ENCODE measurements at regions of chr3 and their contacts with region 1.

Region 1: GRCh38 chr3:32733631-32734229 is 48.7 kb downstream of the CNOT10 start:
- DNase-seq: peak; percentile 23 to 42 (median 26)
- ATAC-seq: peak; percentile 78
- H3K4me3 ChIP-seq: no peak overlapping the region
- H3K27ac ChIP-seq: no peak overlapping the region
- H3K4me1 ChIP-seq: no peaks in the 10 kb centered on the region
- H3K27me3 ChIP-seq: no peaks in the 10 kb centered on the region
- CTCF ChIP-seq: peak; percentile 34 to 67 (median 44); a peak in 3 of 6 replicates
- EP300 ChIP-seq: no peak
- POLR2A ChIP-seq: no peak
- RAD21 ChIP-seq: peak; percentile 59 to 66

Region 2: DNA sequence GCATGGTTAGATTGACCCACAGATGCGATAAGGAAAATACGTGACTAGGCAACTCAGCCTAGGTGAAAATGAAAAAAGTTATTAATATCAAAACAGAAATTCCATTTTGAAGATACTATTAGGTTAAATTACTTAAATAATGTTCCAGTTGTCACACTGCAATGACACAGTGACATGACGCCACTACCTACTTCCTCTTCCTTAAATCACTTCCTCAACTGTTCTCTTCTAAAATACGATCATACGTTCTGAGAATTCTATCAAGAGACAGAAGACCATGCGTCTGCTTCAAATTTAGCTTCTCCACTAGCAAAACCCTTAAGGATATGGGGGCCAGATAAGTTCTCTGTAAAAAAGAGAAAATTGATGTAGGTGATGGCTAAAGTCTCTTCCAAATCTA is 249.3 kb before region 1 on chr3:
- CTCF ChIA-PET with region 1: no interaction called
- POLR2A ChIA-PET with region 1: no interaction called
- in situ Hi-C with region 1: no loop called
- intact Hi-C with region 1: no loop called
- DNase-seq: no peak
- ATAC-seq: no peak
- H3K4me3 ChIP-seq: no peak overlapping the region
- H3K27ac ChIP-seq: no peak overlapping the region
- H3K4me1 ChIP-seq: peaks cover 0 to 3% of the 10 kb centered on the region in 2 experiments; a peak in 1 of 5 replicates
- H3K27me3 ChIP-seq: no peaks in the 10 kb centered on the region
- CTCF ChIP-seq: no peak
- EP300 ChIP-seq: no peak
- POLR2A ChIP-seq: no peak
- RAD21 ChIP-seq: no peak

Region 3: GRCh38 chr3:32698506-32698905 is 35.2 kb before region 1 on chr3:
- CTCF ChIA-PET with region 1: no interaction called
- POLR2A ChIA-PET with region 1: no interaction called
- in situ Hi-C with region 1: no loop called
- intact Hi-C with region 1: no loop called
- DNase-seq: no peak
- ATAC-seq: no peak
- H3K4me3 ChIP-seq: no peak overlapping the region
- H3K27ac ChIP-seq: peak overlapping the region; percentile 13; the same call in 2 of the 3 replicates
- H3K4me1 ChIP-seq: peaks cover 9 to 37% of the 10 kb centered on the region in 2 experiments; a peak in 4 of 5 replicates
- H3K27me3 ChIP-seq: no peaks in the 10 kb centered on the region
- CTCF ChIP-seq: no peak
- EP300 ChIP-seq: no peak
- POLR2A ChIP-seq: no peak
- RAD21 ChIP-seq: no peak

Region 4: GRCh38 chr3:32781210-32781968 is 47.7 kb after region 1 on chr3:
- CTCF ChIA-PET with region 1: no interaction called
- POLR2A ChIA-PET with region 1: no interaction called
- in situ Hi-C with region 1: no loop called
- intact Hi-C with region 1: loop called (anchors 5 kb)
- DNase-seq: peak; percentile 90 to 95 (median 92)
- ATAC-seq: peak; percentile 97
- H3K4me3 ChIP-seq: peak overlapping the region; percentile 50
- H3K27ac ChIP-seq: peak overlapping the region; percentile 37; the same call in 2 of the 3 replicates
- H3K4me1 ChIP-seq: peaks cover 4 to 20% of the 10 kb centered on the region in 2 experiments; a peak in 4 of 5 replicates
- H3K27me3 ChIP-seq: 0 out of 5 replicates have a peak, but pooled peaks cover 0 to under 1% of the 10 kb centered on the region in 2 experiments
- CTCF ChIP-seq: peak; percentile 84 to 95 (median 87)
- EP300 ChIP-seq: 0 out of 2 replicates have a peak, but pooled peaks have one; percentile 15
- POLR2A ChIP-seq: peak; percentile 77
- RAD21 ChIP-seq: peak; percentile 57 to 76

Region 5: DNA sequence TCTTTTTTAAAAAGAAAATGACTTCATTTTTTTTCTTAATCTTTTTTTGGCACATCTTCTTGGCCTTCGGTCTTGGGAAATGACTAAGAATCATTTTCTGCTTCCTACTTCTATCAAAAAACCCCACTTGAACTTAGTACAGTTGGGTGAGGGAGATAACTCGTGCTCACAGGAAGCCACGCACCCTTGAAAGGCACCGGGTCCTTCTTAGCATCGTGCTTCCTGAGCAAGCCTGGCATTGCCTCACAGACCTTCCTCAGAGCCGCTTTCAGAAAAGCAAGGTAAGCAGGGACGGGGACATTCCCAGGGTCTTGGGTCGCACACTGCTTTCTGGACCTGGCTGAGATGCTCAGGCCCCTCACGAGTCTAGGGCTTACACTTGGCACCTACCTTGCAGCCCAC is 217.7 kb after region 1 on chr3 and contains the start of gene CCR4:
- CTCF ChIA-PET with region 1: no interaction called
- POLR2A ChIA-PET with region 1: no interaction called
- in situ Hi-C with region 1: no loop called
- intact Hi-C with region 1: no loop called
- DNase-seq: peak in 2 of 4 experiments; percentile 48 to 63
- ATAC-seq: peak; percentile 16
- H3K4me3 ChIP-seq: no peak within 1 kb of the TSS
- H3K27ac ChIP-seq: no peak within 1 kb of the TSS
- H3K4me1 ChIP-seq: peaks cover 3 to 10% of the 10 kb centered on the region in 2 experiments; a peak in 3 of 5 replicates
- H3K27me3 ChIP-seq: no peaks in the 10 kb centered on the region
- CTCF ChIP-seq: no peak
- EP300 ChIP-seq: peak; percentile 59; the same call in 1 of the 2 replicates
- POLR2A ChIP-seq: no peak
- RAD21 ChIP-seq: no peak
- polyA plus RNA-seq, gene CCR4: 0.04 TPM in 1 of 2 experiments, not detected in the other